Ovary (tissue), 10 donors: ENCODE measurements at regions of chr9 and their contacts with region 1.

Region 1: DNA sequence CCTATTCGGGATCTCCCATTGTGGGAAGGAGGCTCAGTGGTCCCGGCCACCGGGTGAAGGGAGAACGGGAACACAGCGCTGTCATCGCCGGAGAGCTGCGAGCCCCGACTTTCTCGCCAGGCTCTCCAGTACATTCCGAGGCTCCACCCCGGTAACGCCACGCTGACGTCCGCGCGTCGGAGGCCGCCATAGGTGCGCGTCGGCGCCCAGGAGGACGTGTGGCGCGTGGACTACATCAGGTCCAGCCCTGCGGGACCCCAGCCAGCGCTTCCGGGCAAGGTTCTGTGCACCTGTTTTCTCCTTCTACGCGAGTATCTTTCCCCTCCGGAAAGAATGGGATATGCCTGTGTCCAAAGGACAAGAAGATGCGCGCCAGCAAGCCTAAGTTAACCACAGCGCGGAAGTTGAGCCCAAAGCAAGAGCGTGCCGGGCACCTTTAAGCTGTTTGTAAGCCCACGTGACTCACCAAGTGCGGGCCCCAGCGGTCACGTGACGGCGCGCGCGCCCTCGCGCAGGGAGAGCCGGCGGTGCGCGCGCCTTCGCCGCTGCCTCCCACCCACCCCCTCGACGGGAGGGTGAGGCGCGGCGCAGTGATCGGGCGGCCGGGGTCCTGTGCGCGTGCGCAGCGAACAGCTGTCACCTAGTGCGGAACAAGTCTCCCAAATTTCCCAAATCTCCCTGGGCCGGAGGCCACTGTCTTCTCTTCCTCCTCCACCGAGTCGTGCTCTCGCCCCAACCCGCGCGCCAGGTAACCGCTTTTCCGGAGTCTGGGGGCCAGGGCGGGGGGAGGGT is at the start of gene KDM4C:
- DNase-seq: peak; percentile 95 to 97 (median 96)
- H3K4me3 ChIP-seq: peak within 1 kb of the TSS; percentile 87
- H3K27ac ChIP-seq: peak within 1 kb of the TSS; percentile 82 to 98
- H3K4me1 ChIP-seq: peaks cover 7% of the 10 kb centered on the region
- H3K27me3 ChIP-seq: no peaks in the 10 kb centered on the region
- CTCF ChIP-seq: peak in 1 of 3 donors; percentile 6
- EP300 ChIP-seq: peak; percentile 72
- POLR2A ChIP-seq: peak; percentile 64
- total RNA-seq, gene KDM4C: 25.1 to 35.6 (median 28.3) TPM

Region 2: DNA sequence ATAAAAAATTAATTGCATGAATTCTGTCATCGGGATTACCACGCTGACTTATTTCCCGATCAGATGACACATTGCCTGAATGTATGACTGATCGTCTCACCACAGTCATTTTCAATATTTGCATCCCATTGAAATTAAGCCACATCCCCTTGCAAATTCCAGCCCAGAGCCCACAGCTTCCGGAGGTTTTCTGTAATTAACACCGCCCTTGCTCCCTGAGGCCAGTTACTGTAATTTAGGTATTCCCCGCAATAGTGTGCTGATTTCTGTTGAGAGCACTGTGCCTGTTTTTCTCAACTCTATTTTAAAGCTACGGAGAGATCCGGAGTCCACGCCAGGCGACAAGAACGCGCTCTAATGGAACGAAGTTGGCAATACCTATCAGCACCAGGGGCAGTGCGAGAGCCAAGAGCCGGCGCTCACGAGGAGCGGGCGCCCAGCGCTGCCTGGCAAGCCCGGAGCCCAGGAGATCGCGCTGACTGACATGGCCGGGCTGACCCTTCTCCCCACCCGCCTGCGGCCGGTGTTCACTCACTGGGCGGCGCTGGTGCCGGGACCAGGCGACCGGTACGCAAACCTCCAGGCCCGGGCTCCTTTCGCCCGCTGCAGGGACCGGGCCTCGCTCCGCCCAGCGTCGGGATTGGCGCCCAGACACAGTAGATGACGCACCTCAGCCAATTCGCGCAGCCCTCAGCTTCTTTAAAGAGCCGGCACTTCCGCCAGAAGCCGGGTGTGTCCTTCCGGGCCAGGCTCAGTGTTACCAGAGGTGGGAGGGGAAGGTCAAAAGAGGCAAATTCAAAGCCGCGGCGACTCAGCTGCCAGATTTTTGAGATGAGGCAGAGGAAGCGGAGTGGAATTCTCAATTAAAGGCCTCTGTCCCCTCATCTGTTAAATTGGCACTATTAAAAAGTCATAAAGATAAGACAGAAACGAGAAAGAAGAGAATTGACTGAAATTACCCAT is 1320.1 kb before region 1 on chr9 and contains the start of gene PLGRKT:
- intact Hi-C with region 1: loop called in 1 of 4 experiments (anchors 10 kb)
- DNase-seq: peak; percentile 91 to 95 (median 91)
- H3K4me3 ChIP-seq: peak within 1 kb of the TSS; percentile 81
- H3K27ac ChIP-seq: peak within 1 kb of the TSS; percentile 23 to 84
- H3K4me1 ChIP-seq: peaks cover 1% of the 10 kb centered on the region
- H3K27me3 ChIP-seq: no peaks in the 10 kb centered on the region
- CTCF ChIP-seq: peak in 2 of 3 donors; percentile 16 to 46
- EP300 ChIP-seq: no peak
- POLR2A ChIP-seq: peak; percentile 77
- total RNA-seq, gene PLGRKT: 2.9 to 24.6 (median 13.3) TPM

Region 3: DNA sequence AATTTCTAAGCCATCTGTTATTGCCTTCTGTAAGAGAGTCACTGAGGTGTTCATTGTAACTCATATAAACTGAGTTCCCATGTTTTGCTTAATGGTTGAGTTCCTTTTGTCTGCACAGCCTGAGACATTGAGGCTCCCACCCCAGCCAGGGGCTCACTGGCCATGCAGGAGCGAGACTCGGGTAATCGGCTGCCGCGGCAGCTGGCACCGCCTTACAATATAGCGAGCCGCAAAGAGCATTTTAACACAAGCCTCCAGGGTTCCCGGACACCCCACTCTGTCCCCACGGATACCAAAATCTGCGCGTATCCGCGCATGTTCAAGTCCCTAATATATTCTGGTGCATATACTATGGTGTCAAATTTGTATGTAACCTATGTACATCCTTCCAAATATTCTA is 87.8 kb before region 1 on chr9:
- intact Hi-C with region 1: no loop called
- DNase-seq: no peak
- H3K4me3 ChIP-seq: no peak overlapping the region
- H3K27ac ChIP-seq: no peak overlapping the region
- H3K4me1 ChIP-seq: no peaks in the 10 kb centered on the region
- H3K27me3 ChIP-seq: no peaks in the 10 kb centered on the region
- CTCF ChIP-seq: no peak
- EP300 ChIP-seq: no peak
- POLR2A ChIP-seq: no peak

Region 4: GRCh38 chr9:6681147-6681956 is 76.3 kb before region 1 on chr9:
- intact Hi-C with region 1: loop called in 1 of 4 experiments (anchors 5 kb)
- DNase-seq: peak; percentile 97
- H3K4me3 ChIP-seq: peak overlapping the region; percentile 91
- H3K27ac ChIP-seq: peak overlapping the region; percentile 69 to 92
- H3K4me1 ChIP-seq: no peaks in the 10 kb centered on the region
- H3K27me3 ChIP-seq: no peaks in the 10 kb centered on the region
- CTCF ChIP-seq: peak in 1 of 3 donors; percentile 6
- EP300 ChIP-seq: no peak
- POLR2A ChIP-seq: peak; percentile 53

Region 5: GRCh38 chr9:6703898-6704639 is 53.6 kb before region 1 on chr9:
- intact Hi-C with region 1: loop called in 1 of 4 experiments (anchors 5 kb)
- DNase-seq: peak; percentile 70 to 89 (median 83)
- H3K4me3 ChIP-seq: peak overlapping the region; percentile 48
- H3K27ac ChIP-seq: peak overlapping the region; percentile 41 to 62
- H3K4me1 ChIP-seq: no peaks in the 10 kb centered on the region
- H3K27me3 ChIP-seq: no peaks in the 10 kb centered on the region
- CTCF ChIP-seq: no peak
- EP300 ChIP-seq: no peak
- POLR2A ChIP-seq: peak; percentile 56